CD14-positive monocyte (primary cell): ENCODE measurements at regions of chr4 and their contacts with region 1.

Region 1: DNA sequence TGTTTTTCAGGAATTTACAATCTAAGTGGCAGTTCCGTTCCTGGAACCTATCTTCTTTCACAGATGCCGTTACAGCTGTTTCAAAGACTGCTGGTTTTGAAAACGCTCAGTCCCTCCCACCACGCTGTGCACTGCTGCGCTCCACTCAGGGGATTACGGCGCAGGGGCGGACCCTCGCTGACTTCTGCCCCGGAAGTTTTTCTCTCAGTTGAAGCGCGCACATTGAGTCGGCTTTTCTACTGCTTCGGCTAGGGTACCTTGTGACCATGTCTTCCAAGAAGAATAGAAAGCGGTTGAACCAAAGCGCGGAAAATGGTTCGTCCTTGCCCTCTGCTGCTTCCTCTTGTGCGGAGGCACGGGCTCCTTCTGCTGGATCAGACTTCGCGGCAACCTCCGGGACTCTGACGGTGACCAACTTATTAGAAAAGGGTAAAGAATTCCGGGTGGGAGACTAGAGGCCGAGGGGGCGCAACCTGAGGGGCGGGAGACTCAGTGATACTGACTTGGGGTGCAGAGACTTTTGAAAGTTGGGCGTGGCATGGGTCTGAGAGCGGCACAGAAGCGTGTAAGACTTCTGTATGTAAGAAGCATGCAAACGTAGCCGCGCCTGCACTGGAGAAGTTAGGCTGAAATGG is 597 bp upstream of the NUDT6 start:
- DNase-seq: peak; percentile 57 to 59 (median 58)
- H3K4me3 ChIP-seq: peak overlapping the region; percentile 66 to 86 (median 74)
- H3K4me3 Mint-ChIP-seq: peak overlapping the region; percentile 99
- H3K27ac ChIP-seq: peak overlapping the region; percentile 70 to 77
- H3K27ac Mint-ChIP-seq: peak overlapping the region; percentile 87 to 94 (median 91)
- H3K4me1 ChIP-seq: peaks cover 14 to 23% of the 10 kb centered on the region in 2 donors
- H3K4me1 Mint-ChIP-seq: peaks cover 13% of the 10 kb centered on the region
- H3K27me3 ChIP-seq: no peaks in the 10 kb centered on the region
- H3K27me3 Mint-ChIP-seq: peaks cover 0 to 3% (median 0%) of the 10 kb centered on the region in 3 donors
- CTCF ChIP-seq: no peak

Region 2: GRCh38 chr4:122732329-122733026 is 190.5 kb before region 1 on chr4 and contains the start of gene BBS12:
- intact Hi-C with region 1: loop called in 1 of 2 experiments (anchors 10 kb)
- DNase-seq: peak; percentile 98 to 99 (median 99)
- H3K4me3 ChIP-seq: peak within 1 kb of the TSS; percentile 61 to 95 (median 82)
- H3K4me3 Mint-ChIP-seq: peak within 1 kb of the TSS; percentile 94 to 96
- H3K27ac ChIP-seq: peak within 1 kb of the TSS; percentile 78 to 89
- H3K27ac Mint-ChIP-seq: peak within 1 kb of the TSS; percentile 94 to 99 (median 98)
- H3K4me1 ChIP-seq: peaks cover 13 to 18% of the 10 kb centered on the region in 2 donors
- H3K4me1 Mint-ChIP-seq: peaks cover 18% of the 10 kb centered on the region
- H3K27me3 ChIP-seq: no peaks in the 10 kb centered on the region
- H3K27me3 Mint-ChIP-seq: no peaks in the 10 kb centered on the region
- CTCF ChIP-seq: no peak
- polyA plus RNA-seq, gene BBS12: 0.19 to 1.0 (median 0.52) TPM

Region 3: GRCh38 chr4:122764821-122765215 is 158.2 kb before region 1 on chr4:
- intact Hi-C with region 1: loop called in 1 of 2 experiments (anchors 10 kb)
- DNase-seq: peak in 2 of 3 donors; percentile 30 to 53
- H3K4me3 ChIP-seq: no peak overlapping the region
- H3K4me3 Mint-ChIP-seq: no peak overlapping the region
- H3K27ac ChIP-seq: no peak overlapping the region
- H3K27ac Mint-ChIP-seq: peak overlapping the region in 1 of 7 donors; percentile 5
- H3K4me1 ChIP-seq: peaks cover 8 to 27% of the 10 kb centered on the region in 2 donors
- H3K4me1 Mint-ChIP-seq: peaks cover 27% of the 10 kb centered on the region
- H3K27me3 ChIP-seq: no peaks in the 10 kb centered on the region
- H3K27me3 Mint-ChIP-seq: peaks cover 0 to 2% (median 0%) of the 10 kb centered on the region in 3 donors
- CTCF ChIP-seq: no peak

Region 4: GRCh38 chr4:122783301-122784215 is 139.4 kb before region 1 on chr4:
- intact Hi-C with region 1: no loop called
- DNase-seq: no peak
- H3K4me3 ChIP-seq: no peak overlapping the region
- H3K4me3 Mint-ChIP-seq: no peak overlapping the region
- H3K27ac ChIP-seq: no peak overlapping the region
- H3K27ac Mint-ChIP-seq: no peak overlapping the region
- H3K4me1 ChIP-seq: no peaks in the 10 kb centered on the region
- H3K4me1 Mint-ChIP-seq: no peaks in the 10 kb centered on the region
- H3K27me3 ChIP-seq: no peaks in the 10 kb centered on the region
- H3K27me3 Mint-ChIP-seq: peaks cover 3 to 5% (median 3%) of the 10 kb centered on the region in 3 donors
- CTCF ChIP-seq: no peak